HepG2 (cell line): ENCODE measurements at regions of chr2 and their contacts with region 1.

Region 1: DNA sequence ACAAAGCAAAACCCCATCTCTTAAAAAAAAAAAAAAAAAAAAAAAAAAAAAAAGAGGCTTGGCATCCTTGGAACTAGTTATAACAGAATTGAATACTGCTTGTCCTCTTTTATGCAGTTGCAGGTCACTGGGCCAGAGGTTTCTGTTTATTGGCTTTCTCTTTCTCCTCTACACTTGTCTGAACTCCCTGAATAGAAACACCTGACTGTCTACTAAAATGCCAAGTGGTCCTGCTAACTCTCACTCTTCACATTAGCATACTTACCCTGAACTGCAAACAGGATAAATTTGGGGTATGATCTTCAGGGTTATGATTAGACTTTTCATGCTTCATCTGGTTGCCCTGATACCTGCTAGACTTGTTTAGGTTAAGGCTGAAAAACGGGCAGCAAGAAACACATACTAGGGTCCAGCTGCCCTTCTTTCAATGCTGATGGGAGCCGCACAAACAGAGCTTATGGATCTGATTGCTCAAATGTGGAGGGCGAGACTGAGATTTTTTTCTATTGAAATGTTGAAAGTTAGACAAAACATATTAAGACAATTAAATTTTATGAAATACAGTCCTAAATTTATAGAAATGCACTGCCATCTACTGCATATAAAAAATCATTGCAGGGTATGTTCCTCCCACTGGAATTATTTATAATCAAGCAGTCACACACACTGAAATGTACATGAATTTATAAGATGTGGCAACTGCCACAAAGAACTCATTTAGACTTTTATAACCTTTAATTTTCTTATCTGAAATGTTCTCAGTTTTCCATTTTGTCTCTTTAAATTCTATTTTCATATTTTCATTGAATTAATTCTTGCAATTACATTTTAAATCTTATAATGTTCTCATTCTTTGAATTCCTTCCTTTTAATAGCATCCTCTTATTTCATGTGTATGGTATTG is 40.8 kb downstream of the GTF3C3 start:
- DNase-seq: no peak
- ATAC-seq: peak; percentile 49
- H3K4me3 ChIP-seq: no peak overlapping the region
- H3K27ac ChIP-seq: no peak overlapping the region
- H3K4me1 ChIP-seq: no peaks in the 10 kb centered on the region
- H3K27me3 ChIP-seq: no peaks in the 10 kb centered on the region
- CTCF ChIP-seq: peak; percentile 22; the same call in 1 of the 2 replicates
- EP300 ChIP-seq: no peak
- POLR2A ChIP-seq: no peak
- RAD21 ChIP-seq: no peak

Region 2: GRCh38 chr2:196431957-196432356 is 326.8 kb before region 1 on chr2:
- CTCF ChIA-PET with region 1: no interaction called
- POLR2A ChIA-PET with region 1: no interaction called
- in situ Hi-C with region 1: no loop called
- intact Hi-C with region 1: loop called (anchors 5 kb)
- DNase-seq: peak; percentile 29
- ATAC-seq: peak; percentile 81
- H3K4me3 ChIP-seq: no peak overlapping the region
- H3K27ac ChIP-seq: no peak overlapping the region
- H3K4me1 ChIP-seq: no peaks in the 10 kb centered on the region
- H3K27me3 ChIP-seq: no peaks in the 10 kb centered on the region
- CTCF ChIP-seq: peak; percentile 45; the same call in 1 of the 2 replicates
- EP300 ChIP-seq: no peak
- POLR2A ChIP-seq: no peak
- RAD21 ChIP-seq: no peak

Region 3: DNA sequence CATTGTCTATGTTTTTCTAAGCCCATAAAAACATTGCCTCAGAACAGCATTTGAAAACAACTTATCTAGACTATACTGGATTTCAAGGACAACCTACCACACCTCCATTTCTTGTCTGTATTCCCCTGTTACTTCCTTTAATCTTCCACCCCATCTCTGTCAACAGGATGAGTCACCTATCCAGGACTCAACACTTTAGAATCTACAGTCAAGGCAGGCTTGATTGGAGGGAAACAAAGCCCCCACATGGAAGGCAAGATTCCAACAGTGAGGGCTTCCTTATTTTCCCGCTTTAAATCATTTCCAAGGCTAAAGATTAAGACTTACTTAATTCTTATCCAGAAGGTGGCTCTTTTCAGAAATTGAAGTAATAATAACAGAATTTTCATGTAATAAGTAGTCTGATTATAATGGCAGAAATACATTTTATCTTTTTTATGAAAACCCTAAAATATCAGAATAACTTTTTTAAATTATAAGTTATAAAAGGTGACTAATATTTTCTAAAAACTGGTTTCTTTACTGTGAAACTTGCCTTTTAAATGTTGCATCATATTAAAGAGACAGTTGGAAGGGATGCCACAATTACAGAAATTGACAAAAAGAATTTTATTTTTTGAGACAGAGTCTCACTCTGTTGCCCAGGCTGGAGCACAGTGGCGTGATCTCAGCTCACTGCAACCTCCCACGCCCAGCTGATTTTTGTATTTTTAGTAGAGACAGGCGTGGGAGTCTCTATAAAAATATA is 257.9 kb before region 1 on chr2:
- CTCF ChIA-PET with region 1: no interaction called
- POLR2A ChIA-PET with region 1: no interaction called
- in situ Hi-C with region 1: no loop called
- intact Hi-C with region 1: no loop called
- DNase-seq: no peak
- ATAC-seq: no peak
- H3K4me3 ChIP-seq: no peak overlapping the region
- H3K27ac ChIP-seq: no peak overlapping the region
- H3K4me1 ChIP-seq: no peaks in the 10 kb centered on the region
- H3K27me3 ChIP-seq: peaks cover 0 to 4% of the 10 kb centered on the region in 2 experiments; a peak in 1 of 5 replicates
- CTCF ChIP-seq: no peak
- EP300 ChIP-seq: no peak
- POLR2A ChIP-seq: no peak
- RAD21 ChIP-seq: no peak

Region 4: GRCh38 chr2:196660244-196660643 is 98.5 kb before region 1 on chr2:
- CTCF ChIA-PET with region 1: no interaction called
- POLR2A ChIA-PET with region 1: no interaction called
- in situ Hi-C with region 1: no loop called
- intact Hi-C with region 1: no loop called
- DNase-seq: no peak
- ATAC-seq: no peak
- H3K4me3 ChIP-seq: no peak overlapping the region
- H3K27ac ChIP-seq: no peak overlapping the region
- H3K4me1 ChIP-seq: no peaks in the 10 kb centered on the region
- H3K27me3 ChIP-seq: no peaks in the 10 kb centered on the region
- CTCF ChIP-seq: no peak
- EP300 ChIP-seq: no peak
- POLR2A ChIP-seq: no peak
- RAD21 ChIP-seq: no peak